H1 (cell line): ENCODE measurements at regions of chr13 and their contacts with region 1.

Region 1: DNA sequence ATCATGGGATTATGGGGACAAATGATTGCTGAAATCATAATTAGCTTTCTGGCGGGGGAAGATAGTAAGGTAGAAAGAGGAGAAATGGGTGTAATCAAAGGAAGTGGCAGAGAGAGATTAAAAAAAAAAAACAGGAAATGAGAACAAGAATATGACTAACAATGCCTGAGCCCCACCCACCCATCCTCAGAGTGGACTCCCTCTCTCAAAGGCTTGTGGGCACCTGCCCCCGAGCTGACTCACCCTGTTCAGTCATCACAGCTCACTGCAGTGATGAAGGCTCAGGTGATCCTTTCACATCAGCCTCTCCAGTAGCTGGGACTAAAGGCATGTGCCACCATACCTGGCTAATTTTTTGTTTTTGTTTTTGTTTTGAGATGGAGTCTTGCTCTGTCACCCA is 26.4 kb upstream of the TPT1 start:
- DNase-seq: peak in 1 of 2 experiments; percentile 66
- H3K4me3 ChIP-seq: no peak overlapping the region
- H3K27ac ChIP-seq: no peak overlapping the region
- H3K4me1 ChIP-seq: peaks cover 0 to 7% (median 3%) of the 10 kb centered on the region in 4 experiments; a peak in 5 of 7 replicates
- H3K27me3 ChIP-seq: no peaks in the 10 kb centered on the region
- CTCF ChIP-seq: no peak
- EP300 ChIP-seq: no peak
- POLR2A ChIP-seq: peak in 1 of 2 experiments; percentile 37; a peak in 1 of 3 replicates
- RAD21 ChIP-seq: no peak

Region 2: DNA sequence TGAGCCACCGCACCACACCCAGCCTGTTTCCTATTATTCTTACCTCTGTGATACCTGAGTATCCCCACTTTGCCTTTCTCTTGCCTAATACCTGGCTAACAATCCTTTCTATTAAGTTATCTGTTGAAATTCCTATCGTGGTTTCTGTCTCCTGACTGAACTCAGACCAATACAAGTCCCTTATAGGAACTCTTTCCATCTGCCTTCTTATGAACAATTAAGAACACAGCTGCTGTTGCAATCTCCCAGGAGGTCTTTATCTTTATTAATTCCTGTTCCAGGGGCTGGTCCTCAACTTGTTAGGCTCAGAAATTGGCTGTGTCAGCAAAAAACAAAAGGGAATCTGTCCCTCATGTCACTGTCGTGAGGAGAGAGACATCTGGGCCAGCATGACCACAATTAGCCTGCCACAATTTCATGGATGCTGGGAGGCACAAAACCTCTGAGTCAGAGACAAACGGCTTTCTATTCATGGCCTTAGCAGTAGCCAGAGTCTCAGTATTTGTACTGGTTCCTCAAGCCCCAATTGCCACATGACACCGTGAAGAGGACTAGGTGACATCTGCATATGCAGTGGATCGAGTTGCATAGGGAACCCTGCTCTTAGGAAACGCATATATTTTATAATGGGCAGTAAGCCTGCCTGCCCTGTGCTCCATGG is 436.3 kb before region 1 on chr13:
- CTCF ChIA-PET with region 1: no interaction called
- POLR2A ChIA-PET with region 1: no interaction called
- DNase-seq: no peak
- H3K4me3 ChIP-seq: no peak overlapping the region
- H3K27ac ChIP-seq: no peak overlapping the region
- H3K4me1 ChIP-seq: peaks cover 0 to 6% (median 0%) of the 10 kb centered on the region in 4 experiments; a peak in 2 of 7 replicates
- H3K27me3 ChIP-seq: no peaks in the 10 kb centered on the region
- CTCF ChIP-seq: no peak
- EP300 ChIP-seq: no peak
- POLR2A ChIP-seq: no peak
- RAD21 ChIP-seq: no peak

Region 3: DNA sequence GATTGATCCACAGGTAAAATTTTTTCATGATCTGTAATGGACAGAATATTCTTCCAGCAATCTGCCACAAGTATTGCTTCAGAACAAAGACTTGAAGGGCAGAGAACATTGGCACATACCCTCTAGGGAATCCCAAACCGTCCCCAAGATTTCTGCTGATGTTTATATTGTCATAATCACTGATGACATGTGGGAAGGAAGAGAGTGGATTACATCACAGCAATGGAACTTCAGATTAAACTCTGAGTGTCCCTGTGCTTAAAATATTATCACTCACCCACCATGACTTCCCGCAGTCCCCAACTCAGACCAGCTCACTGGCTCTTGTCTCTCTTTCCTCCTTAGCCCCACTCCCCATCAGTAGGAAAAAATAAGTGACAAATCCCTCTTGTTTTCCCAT is 17.9 kb before region 1 on chr13:
- CTCF ChIA-PET with region 1: interaction called, 34 read pairs
- POLR2A ChIA-PET with region 1: interaction called, 138 read pairs
- DNase-seq: no peak
- H3K4me3 ChIP-seq: no peak overlapping the region
- H3K27ac ChIP-seq: no peak overlapping the region
- H3K4me1 ChIP-seq: no peaks in the 10 kb centered on the region
- H3K27me3 ChIP-seq: no peaks in the 10 kb centered on the region
- CTCF ChIP-seq: no peak
- EP300 ChIP-seq: no peak
- POLR2A ChIP-seq: no peak
- RAD21 ChIP-seq: no peak

Region 4: GRCh38 chr13:45385907-45386553 is 18.7 kb after region 1 on chr13:
- CTCF ChIA-PET with region 1: interaction called, 164 read pairs
- POLR2A ChIA-PET with region 1: interaction called, 3 read pairs
- DNase-seq: no peak
- H3K4me3 ChIP-seq: no peak overlapping the region
- H3K27ac ChIP-seq: no peak overlapping the region
- H3K4me1 ChIP-seq: no peaks in the 10 kb centered on the region
- H3K27me3 ChIP-seq: no peaks in the 10 kb centered on the region; a peak in 1 of 7 replicates
- CTCF ChIP-seq: no peak
- EP300 ChIP-seq: no peak
- POLR2A ChIP-seq: no peak
- RAD21 ChIP-seq: no peak

Region 5: GRCh38 chr13:45393941-45394570 is 26.7 kb after region 1 on chr13:
- CTCF ChIA-PET with region 1: interaction called, 164 read pairs
- POLR2A ChIA-PET with region 1: interaction called, 10 read pairs
- DNase-seq: peak in 1 of 2 experiments; percentile 49
- H3K4me3 ChIP-seq: no peak overlapping the region
- H3K27ac ChIP-seq: no peak overlapping the region
- H3K4me1 ChIP-seq: no peaks in the 10 kb centered on the region
- H3K27me3 ChIP-seq: no peaks in the 10 kb centered on the region
- CTCF ChIP-seq: peak; percentile 66 to 73 (median 70)
- EP300 ChIP-seq: no peak
- POLR2A ChIP-seq: no peak
- RAD21 ChIP-seq: peak; percentile 73 to 75

Region 6: DNA sequence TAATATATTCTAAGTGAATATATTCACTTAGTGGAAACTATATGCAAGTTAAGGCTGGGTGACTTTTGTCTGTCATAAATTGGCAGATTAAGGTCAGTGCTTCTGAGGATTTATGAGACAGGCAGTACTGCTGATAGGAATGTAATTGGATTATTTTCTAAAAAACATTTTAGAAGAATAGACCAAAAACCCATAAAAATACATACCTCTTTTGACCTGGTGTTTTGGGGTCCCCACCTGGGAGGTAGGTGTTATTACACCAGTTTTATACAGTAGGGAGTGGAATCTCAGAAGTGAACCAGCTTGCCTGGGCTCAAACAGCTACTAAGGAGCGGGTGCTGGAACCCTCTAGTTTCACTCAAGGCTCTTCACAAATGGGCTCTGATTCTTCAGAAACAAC is 122.7 kb after region 1 on chr13:
- CTCF ChIA-PET with region 1: interaction called, 21 read pairs
- POLR2A ChIA-PET with region 1: interaction called, 3 read pairs
- DNase-seq: no peak
- H3K4me3 ChIP-seq: no peak overlapping the region
- H3K27ac ChIP-seq: no peak overlapping the region
- H3K4me1 ChIP-seq: no peaks in the 10 kb centered on the region
- H3K27me3 ChIP-seq: no peaks in the 10 kb centered on the region
- CTCF ChIP-seq: peak in 2 of 3 experiments; percentile 34 to 42; a peak in 2 of 4 replicates
- EP300 ChIP-seq: no peak
- POLR2A ChIP-seq: no peak
- RAD21 ChIP-seq: peak; percentile 55 to 66